ENCODE measurements at regions of chr11 and their contacts with region 1.

Region 1: GRCh38 chr11:110092515-110093404 is at the start of gene ZC3H12C:
- DNase-seq: peak in 2 of 9 donors; percentile 33 to 66
- ATAC-seq: peak; percentile 79
- H3K4me3 ChIP-seq: no peak within 1 kb of the TSS
- H3K4me3 Mint-ChIP-seq: peak within 1 kb of the TSS; percentile 71 to 88 (median 80)
- H3K27ac ChIP-seq: no peak within 1 kb of the TSS
- H3K27ac Mint-ChIP-seq: peak within 1 kb of the TSS in 1 of 9 donors; percentile 86
- H3K4me1 ChIP-seq: peaks cover 0 to 4% of the 10 kb centered on the region in 2 donors
- H3K4me1 Mint-ChIP-seq: peaks cover 5 to 15% (median 11%) of the 10 kb centered on the region in 7 donors
- H3K27me3 ChIP-seq: peaks cover 11 to 14% of the 10 kb centered on the region in 2 donors
- H3K27me3 Mint-ChIP-seq: peaks cover 30 to 61% (median 42%) of the 10 kb centered on the region in 5 donors
- total RNA-seq, gene ZC3H12C: 0.19 to 2.5 (median 0.35) TPM

Region 2: DNA sequence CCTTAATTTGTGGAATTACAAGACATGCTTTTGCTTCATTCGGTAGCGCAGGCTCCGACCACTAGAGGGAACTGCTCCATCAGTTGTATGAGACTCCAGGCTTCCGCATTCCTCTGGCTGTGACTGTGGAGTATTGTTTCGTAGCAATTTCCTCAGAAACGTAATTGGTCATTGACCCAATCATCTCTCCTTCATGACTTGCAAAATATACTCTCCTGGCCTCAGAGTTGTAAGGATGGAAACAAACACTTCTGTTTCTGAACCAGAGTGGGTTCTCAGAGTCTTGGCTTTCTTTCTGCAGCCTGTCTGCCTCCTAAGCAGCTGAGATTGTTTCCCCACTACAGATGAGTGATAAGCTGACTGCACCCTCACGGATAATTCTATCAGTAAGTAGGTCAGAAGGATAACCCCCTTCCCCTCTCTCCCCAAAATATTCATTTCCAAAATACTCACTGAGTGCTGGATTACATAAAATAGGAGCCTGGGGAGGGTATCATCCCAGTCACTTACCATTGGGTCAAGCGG is 146.4 kb before region 1 on chr11:
- CTCF ChIA-PET with region 1: no interaction called
- POLR2A ChIA-PET with region 1: no interaction called
- intact Hi-C with region 1: loop called in 1 of 2 experiments (anchors 1 kb)
- DNase-seq: peak in 7 of 9 donors; percentile 7 to 51 (median 20)
- ATAC-seq: peak; percentile 97
- H3K4me3 ChIP-seq: no peak overlapping the region
- H3K4me3 Mint-ChIP-seq: peak overlapping the region in 7 of 10 donors; percentile 40 to 75 (median 66)
- H3K27ac ChIP-seq: no peak overlapping the region
- H3K27ac Mint-ChIP-seq: no peak overlapping the region
- H3K4me1 ChIP-seq: no peaks in the 10 kb centered on the region
- H3K4me1 Mint-ChIP-seq: peaks cover 0 to 10% (median 9%) of the 10 kb centered on the region in 7 donors
- H3K27me3 ChIP-seq: no peaks in the 10 kb centered on the region
- H3K27me3 Mint-ChIP-seq: peaks cover 0 to 22% (median 11%) of the 10 kb centered on the region in 5 donors

Region 3: GRCh38 chr11:109984634-109985289 is 108.0 kb before region 1 on chr11:
- CTCF ChIA-PET with region 1: no interaction called
- POLR2A ChIA-PET with region 1: no interaction called
- intact Hi-C with region 1: loop called in 1 of 2 experiments (anchors 5 kb)
- DNase-seq: no peak
- ATAC-seq: peak; percentile 68
- H3K4me3 ChIP-seq: no peak overlapping the region
- H3K4me3 Mint-ChIP-seq: peak overlapping the region in 2 of 10 donors; percentile 7 to 40
- H3K27ac ChIP-seq: no peak overlapping the region
- H3K27ac Mint-ChIP-seq: no peak overlapping the region
- H3K4me1 ChIP-seq: no peaks in the 10 kb centered on the region
- H3K4me1 Mint-ChIP-seq: peaks cover 0 to 16% (median 4%) of the 10 kb centered on the region in 7 donors
- H3K27me3 ChIP-seq: no peaks in the 10 kb centered on the region
- H3K27me3 Mint-ChIP-seq: peaks cover 6 to 19% (median 12%) of the 10 kb centered on the region in 5 donors

Region 4: DNA sequence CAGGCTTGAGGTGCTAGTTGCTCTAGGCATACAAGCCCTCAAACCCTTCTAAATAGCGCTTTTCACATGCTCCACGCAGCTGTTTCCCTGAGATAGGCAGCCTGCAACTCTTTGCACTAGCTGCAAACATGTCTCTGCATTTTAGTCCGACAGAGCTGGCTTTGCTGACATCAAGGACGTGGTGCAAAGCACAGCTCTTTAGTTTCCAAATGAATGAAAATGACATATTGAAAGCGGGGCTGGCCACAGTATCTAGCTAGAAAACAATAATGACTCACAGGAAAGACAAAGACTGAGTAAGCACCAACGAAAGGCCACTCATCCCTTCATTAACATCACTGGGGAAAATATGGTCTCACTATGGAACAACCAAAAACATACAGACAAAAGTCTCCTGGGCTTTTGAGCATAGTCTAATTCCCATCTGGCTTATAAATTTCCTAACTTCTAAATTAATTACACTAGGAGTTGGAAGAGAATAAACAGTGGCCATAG is 14.9 kb before region 1 on chr11:
- CTCF ChIA-PET with region 1: no interaction called
- POLR2A ChIA-PET with region 1: no interaction called
- intact Hi-C with region 1: loop called in 1 of 2 experiments (anchors 1 kb)
- DNase-seq: peak in 1 of 9 donors; percentile 28
- ATAC-seq: peak; percentile 34
- H3K4me3 ChIP-seq: no peak overlapping the region
- H3K4me3 Mint-ChIP-seq: peak overlapping the region in 1 of 10 donors; percentile 58
- H3K27ac ChIP-seq: no peak overlapping the region
- H3K27ac Mint-ChIP-seq: peak overlapping the region in 1 of 9 donors; percentile 87
- H3K4me1 ChIP-seq: no peaks in the 10 kb centered on the region
- H3K4me1 Mint-ChIP-seq: peaks cover 0 to 25% (median 0%) of the 10 kb centered on the region in 7 donors
- H3K27me3 ChIP-seq: no peaks in the 10 kb centered on the region
- H3K27me3 Mint-ChIP-seq: peaks cover 4 to 29% (median 9%) of the 10 kb centered on the region in 5 donors